Head of caudate nucleus (tissue), 42 donors: ENCODE measurements at regions of chr17 and their contacts with region 1.

Region 1: GRCh38 chr17:75784473-75785015 is at the start of gene UNK:
- DNase-seq: peak; percentile 95 to 100 (median 98)

Region 2: GRCh38 chr17:75693500-75694481 is 90.8 kb before region 1 on chr17:
- intact Hi-C with region 1: no loop called
- DNase-seq: peak; percentile 81 to 99 (median 93)

Region 3: GRCh38 chr17:75855310-75856081 is 71.0 kb after region 1 on chr17 and contains the start of gene WBP2:
- intact Hi-C with region 1: loop called (anchors 5 kb)
- DNase-seq: peak; percentile 95 to 100 (median 99)

Region 4: GRCh38 chr17:75896415-75897159 is 112.0 kb after region 1 on chr17 and contains the start of gene TRIM65:
- intact Hi-C with region 1: loop called (anchors 10 kb)
- DNase-seq: peak; percentile 63 to 94 (median 86)